Endothelial cell of umbilical vein (primary cell): ENCODE measurements at regions of chr10 and their contacts with region 1.

Region 1: GRCh38 chr10:124180947-124181549 is 87.7 kb upstream of the CHST15 start:
- DNase-seq: no peak
- H3K4me3 ChIP-seq: no peak overlapping the region
- H3K27ac ChIP-seq: no peak overlapping the region
- H3K4me1 ChIP-seq: no peaks in the 10 kb centered on the region
- H3K27me3 ChIP-seq: peaks cover 0 to 2% of the 10 kb centered on the region in 2 experiments
- CTCF ChIP-seq: no peak
- POLR2A ChIP-seq: no peak

Region 2: GRCh38 chr10:123821136-123821535 is 359.9 kb before region 1 on chr10:
- CTCF ChIA-PET with region 1: no interaction called
- POLR2A ChIA-PET with region 1: no interaction called
- dilution Hi-C with region 1: no loop called
- intact Hi-C with region 1: loop called (anchors 5 kb)
- DNase-seq: no peak
- H3K4me3 ChIP-seq: no peak overlapping the region
- H3K27ac ChIP-seq: no peak overlapping the region
- H3K4me1 ChIP-seq: no peaks in the 10 kb centered on the region
- H3K27me3 ChIP-seq: no peaks in the 10 kb centered on the region
- CTCF ChIP-seq: no peak
- POLR2A ChIP-seq: no peak

Region 3: GRCh38 chr10:124043310-124044142 is 137.5 kb before region 1 on chr10:
- CTCF ChIA-PET with region 1: no interaction called
- POLR2A ChIA-PET with region 1: no interaction called
- dilution Hi-C with region 1: no loop called
- intact Hi-C with region 1: no loop called
- DNase-seq: no peak
- H3K4me3 ChIP-seq: no peak overlapping the region
- H3K27ac ChIP-seq: no peak overlapping the region
- H3K4me1 ChIP-seq: peaks cover 4% of the 10 kb centered on the region
- H3K27me3 ChIP-seq: peaks cover 0 to 2% of the 10 kb centered on the region in 2 experiments
- CTCF ChIP-seq: no peak
- POLR2A ChIP-seq: no peak